Astrocyte of the cerebellum (primary cell): ENCODE measurements at regions of chr17 and their contacts with region 1.

Region 1: DNA sequence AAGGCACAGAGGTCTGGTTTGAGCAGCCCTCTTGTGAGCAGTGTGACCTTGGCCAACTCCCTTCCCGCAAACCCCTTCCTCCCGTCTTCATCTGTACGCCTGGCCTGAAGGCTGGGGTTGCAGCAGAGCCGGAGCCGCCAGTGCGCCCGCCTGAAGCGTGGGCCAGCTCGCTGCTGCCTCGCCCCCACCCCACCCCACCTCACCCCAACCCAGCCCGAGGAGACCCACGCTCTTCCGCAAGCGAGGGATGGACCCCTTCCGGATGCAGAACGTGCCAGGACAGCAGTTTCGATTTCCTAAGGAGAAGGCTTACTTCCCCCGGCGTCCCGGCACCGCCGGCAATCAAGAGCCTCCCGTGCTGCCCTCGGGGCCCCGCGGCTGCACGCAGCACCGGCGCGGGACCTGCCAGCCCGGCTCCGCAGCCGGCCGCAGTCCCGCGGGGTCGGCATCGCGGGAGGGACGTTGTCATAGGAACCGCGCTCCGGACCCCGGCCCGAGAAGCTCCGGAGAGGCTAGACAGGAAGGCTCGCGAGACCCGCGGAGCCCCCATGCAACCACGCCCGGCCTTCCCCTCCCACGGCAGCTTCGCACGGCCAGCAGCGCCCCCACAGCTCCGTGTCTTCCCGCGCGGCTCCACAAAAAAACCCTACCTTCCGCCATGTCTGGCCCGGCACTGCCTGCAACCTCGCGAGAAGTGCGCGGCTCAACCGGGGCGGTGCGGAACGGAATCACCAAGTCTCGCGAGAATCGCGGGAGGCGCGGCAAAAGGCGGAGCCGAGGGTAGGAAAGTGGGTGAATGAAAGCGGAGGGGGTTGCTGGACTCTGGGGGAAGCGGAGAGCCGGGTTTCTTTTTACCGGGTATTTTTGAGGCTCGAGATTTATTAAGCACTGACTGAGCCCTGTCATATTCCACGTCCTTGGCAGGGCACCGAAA is at the start of gene ANKFY1:
- DNase-seq: peak; percentile 85
- H3K4me3 ChIP-seq: peak within 1 kb of the TSS; percentile 79
- CTCF ChIP-seq: peak; percentile 3

Region 2: DNA sequence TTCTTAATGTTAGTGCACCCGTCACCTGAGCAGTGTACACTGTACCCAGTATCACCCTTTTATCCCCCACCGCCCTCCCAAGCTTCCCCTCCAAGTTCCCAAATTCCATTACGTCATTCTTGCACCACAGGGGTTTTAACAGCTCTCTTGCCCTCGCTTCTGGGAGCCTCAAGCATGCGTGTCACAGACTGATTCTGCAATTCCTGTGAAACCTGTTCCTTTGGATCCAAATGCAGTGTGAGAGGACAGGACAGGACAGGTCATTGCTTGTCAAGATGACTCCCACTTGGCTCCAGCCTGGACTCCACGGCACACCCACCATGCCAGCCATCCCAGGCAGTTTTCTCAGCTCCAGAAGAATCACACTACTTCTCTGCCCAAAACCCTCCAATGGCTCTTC is 76.5 kb before region 1 on chr17:
- in situ Hi-C with region 1: no loop called
- DNase-seq: no peak
- H3K4me3 ChIP-seq: no peak overlapping the region
- CTCF ChIP-seq: no peak

Region 3: DNA sequence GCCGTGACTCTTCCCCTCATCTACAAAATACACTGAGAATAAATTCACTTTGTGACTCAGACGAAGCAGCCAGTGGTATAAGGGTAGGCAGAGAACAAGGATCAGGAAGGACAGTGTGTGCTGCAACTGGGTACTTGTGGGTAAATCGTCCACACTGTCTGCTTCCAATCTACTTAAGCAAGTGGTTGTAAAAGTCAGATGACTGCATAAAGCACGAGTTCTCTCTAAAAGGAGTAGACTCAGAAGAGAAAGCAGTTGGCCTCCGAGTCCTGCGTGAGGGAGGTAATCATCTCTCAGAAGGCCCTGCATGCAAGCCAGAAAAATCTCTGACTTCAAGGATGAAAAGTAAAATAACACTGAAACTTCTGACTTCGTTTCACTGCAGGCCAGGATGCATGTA is 42.9 kb before region 1 on chr17:
- in situ Hi-C with region 1: loop called (anchors 5 kb)
- DNase-seq: no peak
- H3K4me3 ChIP-seq: no peak overlapping the region
- CTCF ChIP-seq: no peak

Region 4: DNA sequence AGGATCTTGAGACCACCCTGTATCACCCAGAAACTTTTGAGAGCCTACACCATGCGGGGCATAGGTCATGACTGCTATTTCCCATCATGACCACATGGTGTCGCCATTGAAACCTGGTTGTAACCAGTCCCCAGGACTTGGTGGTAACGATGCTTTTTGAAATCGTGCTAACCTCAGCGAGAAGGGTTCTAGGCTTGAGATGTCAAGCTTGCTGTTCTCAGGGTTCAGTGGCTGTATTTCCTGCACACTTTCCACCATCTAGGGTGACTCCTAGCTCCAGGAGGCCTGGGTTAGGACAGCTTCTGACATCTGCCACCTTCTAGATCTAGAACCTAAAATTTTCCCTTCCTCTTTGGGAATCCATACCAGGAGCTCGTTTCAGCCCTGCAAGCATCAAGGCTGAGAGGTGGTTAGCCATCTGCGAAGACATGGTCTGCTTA is 157.2 kb after region 1 on chr17:
- in situ Hi-C with region 1: loop called (anchors 5 kb)
- DNase-seq: peak; percentile 40
- H3K4me3 ChIP-seq: no peak overlapping the region
- CTCF ChIP-seq: peak; percentile 84

Region 5: DNA sequence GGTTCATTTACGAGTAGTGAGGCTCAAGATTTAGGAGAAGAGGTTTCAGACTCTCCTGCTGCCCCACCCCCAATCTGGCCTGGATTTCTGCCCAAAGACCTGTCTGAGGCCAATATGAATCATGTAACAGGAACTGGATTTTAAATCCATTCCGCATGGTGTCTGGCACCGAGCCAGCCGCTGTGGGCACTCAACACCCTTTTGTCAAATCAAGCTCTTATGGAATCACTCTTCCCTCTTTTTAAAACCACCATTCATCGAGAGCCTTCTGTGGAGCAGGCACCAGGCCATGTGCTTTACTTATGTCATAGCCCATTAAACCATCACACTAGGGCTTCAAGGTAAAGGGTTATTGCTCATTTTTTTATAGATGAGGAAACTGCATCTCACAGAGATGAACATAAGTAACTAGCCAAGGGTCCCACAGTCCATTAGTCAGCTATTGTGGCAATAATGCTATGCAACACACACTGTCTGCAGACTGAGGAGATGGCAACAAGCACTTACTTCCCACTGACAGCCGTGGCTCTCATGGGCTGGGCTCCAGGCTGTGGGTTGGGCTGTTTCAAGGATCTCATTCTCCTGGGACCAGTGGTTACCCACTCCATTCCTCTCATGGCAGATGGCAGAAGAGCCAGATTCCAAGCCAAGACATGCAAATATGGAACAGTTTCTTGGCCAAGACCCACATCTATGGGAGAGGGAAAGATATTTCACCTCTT is 1900.2 kb after region 1 on chr17:
- in situ Hi-C with region 1: no loop called
- DNase-seq: peak; percentile 74
- H3K4me3 ChIP-seq: no peak overlapping the region
- CTCF ChIP-seq: no peak